HEK293T (cell line): ENCODE measurements at regions of chr16 and their contacts with region 1.

Region 1: DNA sequence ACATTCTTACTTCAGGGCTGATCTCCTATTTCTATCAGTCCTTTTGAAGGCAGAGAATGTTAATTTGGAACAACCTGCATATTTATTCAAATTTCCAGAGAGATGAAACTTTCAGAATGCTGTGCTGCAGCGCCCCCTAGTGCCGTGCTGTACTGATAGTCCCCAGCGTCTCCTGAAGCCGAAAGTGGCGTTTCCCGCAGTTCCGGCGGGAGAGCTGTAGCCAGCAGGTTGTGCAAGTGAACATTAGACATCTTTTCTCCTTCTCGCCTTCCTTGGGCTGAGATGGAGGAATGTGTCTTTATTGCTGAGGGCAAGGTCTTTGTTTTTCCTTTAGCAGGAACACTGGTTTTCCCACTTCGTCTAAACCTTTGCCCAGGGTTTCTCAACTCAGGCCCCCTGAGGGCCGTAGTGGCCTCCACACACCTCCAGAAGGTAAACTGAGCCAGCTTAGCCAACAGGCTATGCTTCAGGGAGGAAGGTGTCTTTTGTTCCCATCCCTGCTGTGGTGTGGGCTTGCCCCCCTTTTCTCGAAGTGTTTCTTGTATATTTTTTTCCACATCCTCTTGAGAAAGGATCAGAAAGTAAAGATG is 26.4 kb downstream of the USP10 start:
- DNase-seq: peak; percentile 68

Region 2: DNA sequence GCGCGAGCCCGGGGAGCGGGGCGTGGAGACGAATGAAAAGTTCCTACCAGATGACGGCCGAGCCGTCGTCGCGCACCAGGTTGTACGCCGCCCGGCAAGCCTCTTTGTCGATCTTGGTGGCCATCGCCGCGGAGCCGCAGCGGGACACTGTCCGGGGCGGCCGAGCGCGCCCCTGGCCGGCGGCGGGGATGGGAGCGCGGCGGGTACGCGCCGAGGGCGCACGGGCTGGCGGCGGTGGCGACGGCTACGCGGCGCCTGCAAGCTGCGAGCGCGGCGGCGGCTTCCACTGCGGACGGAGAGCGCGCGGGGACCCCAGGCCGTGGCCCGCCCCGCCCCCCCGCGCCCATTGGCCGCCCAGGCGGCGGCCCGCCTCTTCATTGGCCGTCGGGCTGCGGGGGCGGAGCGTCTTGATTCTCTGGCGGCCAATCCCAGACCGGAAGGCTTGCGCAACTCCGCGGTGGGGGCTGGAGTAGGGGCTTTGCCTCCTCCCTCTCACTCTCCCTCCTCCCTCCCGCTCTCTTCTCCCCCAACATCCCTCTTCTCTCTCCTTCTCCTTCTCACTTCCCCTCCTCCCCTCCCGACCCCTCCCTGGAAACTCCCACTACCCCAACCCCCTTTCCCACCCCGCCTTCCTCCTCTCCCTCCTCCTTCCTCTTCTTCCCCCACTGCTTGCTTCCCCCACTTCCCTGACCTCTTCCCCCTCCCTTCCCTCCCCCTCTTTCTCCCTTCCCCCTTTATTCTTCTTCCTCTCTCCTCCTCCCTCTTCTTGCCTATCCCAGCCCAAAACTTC is 108.2 kb before region 1 on chr16 and contains the start of gene COTL1:
- CTCF ChIA-PET with region 1: interaction called, 14 read pairs
- POLR2A ChIA-PET with region 1: no interaction called
- DNase-seq: peak; percentile 93

Region 3: GRCh38 chr16:84663433-84664101 is 62.6 kb before region 1 on chr16:
- CTCF ChIA-PET with region 1: interaction called, 11 read pairs
- POLR2A ChIA-PET with region 1: no interaction called
- DNase-seq: no peak

Region 4: GRCh38 chr16:84672276-84673202 is 53.6 kb before region 1 on chr16:
- CTCF ChIA-PET with region 1: interaction called, 36 read pairs
- POLR2A ChIA-PET with region 1: no interaction called
- DNase-seq: peak; percentile 89

Region 5: DNA sequence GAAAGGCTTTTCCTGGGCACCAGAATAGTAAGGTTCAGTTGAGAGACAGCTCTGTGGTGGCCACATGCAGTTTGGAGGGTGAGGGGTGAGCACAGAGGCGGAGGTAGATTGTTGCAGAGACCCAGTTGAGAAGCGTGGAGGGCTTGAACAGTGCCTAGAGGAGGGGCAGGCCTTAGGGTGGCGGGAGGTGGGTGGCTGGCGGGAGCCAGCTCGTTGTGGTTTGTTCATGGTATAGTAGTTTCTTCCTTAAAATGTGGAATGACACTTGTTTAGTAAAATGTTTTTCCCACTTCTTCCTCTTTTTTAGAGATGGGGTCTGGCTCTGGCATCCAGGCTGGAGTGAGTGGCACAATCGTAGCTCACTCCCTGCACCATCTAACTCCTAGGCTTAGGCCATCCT is 12.1 kb before region 1 on chr16:
- CTCF ChIA-PET with region 1: interaction called, 13 read pairs
- POLR2A ChIA-PET with region 1: interaction called, 3 read pairs
- DNase-seq: no peak

Region 6: GRCh38 chr16:84738255-84739038 is 12.3 kb after region 1 on chr16:
- CTCF ChIA-PET with region 1: interaction called, 40 read pairs
- POLR2A ChIA-PET with region 1: no interaction called
- DNase-seq: peak; percentile 72

Region 7: GRCh38 chr16:84795329-84796053 is 69.3 kb after region 1 on chr16:
- CTCF ChIA-PET with region 1: no interaction called
- POLR2A ChIA-PET with region 1: no interaction called
- DNase-seq: no peak

Region 8: GRCh38 chr16:84806256-84806889 is 80.2 kb after region 1 on chr16:
- CTCF ChIA-PET with region 1: no interaction called
- POLR2A ChIA-PET with region 1: no interaction called
- DNase-seq: peak; percentile 29